ENCODE measurements at regions of chr2 and their contacts with region 1.

Region 1: DNA sequence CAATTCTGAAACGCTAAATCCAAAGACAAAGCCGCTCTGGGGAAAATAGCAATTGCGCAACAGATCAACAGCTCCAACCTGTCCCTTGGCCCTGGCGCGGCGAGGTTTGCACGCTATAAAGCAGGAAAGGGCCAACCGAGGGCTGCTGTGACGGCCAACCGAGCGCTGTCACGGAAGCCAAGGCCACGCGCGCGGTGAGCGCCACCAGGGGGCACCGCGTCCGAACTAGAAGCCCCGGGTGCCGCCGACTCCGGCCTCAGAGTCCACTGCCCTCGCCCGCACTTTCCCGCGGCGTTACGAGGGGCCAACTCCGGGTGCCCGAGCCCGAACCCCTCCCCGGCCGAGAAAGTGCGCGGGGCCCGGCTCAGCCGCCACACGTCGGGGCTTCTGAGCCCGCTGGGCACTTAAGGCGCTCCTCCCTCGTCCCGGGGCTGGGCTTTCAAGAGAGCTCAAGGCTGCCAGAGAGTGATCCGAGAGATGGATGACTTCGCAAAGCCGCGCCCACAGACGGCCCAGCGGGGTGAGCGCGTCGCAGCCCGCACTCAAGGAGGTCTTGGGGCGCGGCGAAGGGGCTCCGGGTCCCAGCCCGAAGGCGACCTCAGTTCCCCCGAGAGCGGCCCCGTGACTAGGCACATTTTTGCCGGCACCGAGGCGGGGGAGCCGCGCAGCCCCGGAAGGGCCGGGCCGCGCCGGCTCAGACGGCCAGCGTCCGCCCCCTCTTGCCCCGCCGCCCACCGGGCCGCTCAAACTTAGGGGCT is 897 bp downstream of the NFE2L2 start:
- DNase-seq: peak; percentile 83 to 98 (median 93)
- ATAC-seq: peak; percentile 65 to 74 (median 66)
- H3K4me3 ChIP-seq: peak overlapping the region; percentile 84 to 91
- H3K4me3 Mint-ChIP-seq: peak overlapping the region; percentile 96 to 97 (median 96)
- H3K27ac ChIP-seq: peak overlapping the region; percentile 98
- H3K27ac Mint-ChIP-seq: peak overlapping the region; percentile 98 to 99
- H3K4me1 ChIP-seq: peaks cover 30 to 33% of the 10 kb centered on the region in 2 experiments
- H3K4me1 Mint-ChIP-seq: peaks cover 53 to 58% (median 56%) of the 10 kb centered on the region in 3 donors
- H3K27me3 ChIP-seq: no peaks in the 10 kb centered on the region
- H3K27me3 Mint-ChIP-seq: no peaks in the 10 kb centered on the region

Region 2: GRCh38 chr2:177212106-177212890 is 51.3 kb before region 1 on chr2 and contains the start of gene HNRNPA3:
- CTCF ChIA-PET with region 1: interaction called, 3 to 9 read pairs
- POLR2A ChIA-PET with region 1: interaction called in 1 of 2 experiments, 66 read pairs
- DNase-seq: peak; percentile 98 to 100 (median 100)
- ATAC-seq: peak; percentile 84 to 91 (median 87)
- H3K4me3 ChIP-seq: peak within 1 kb of the TSS; percentile 86 to 94
- H3K4me3 Mint-ChIP-seq: peak within 1 kb of the TSS; percentile 90 to 92 (median 92)
- H3K27ac ChIP-seq: peak within 1 kb of the TSS; percentile 100
- H3K27ac Mint-ChIP-seq: peak within 1 kb of the TSS; percentile 99
- H3K4me1 ChIP-seq: peaks cover 23 to 34% of the 10 kb centered on the region in 2 experiments
- H3K4me1 Mint-ChIP-seq: peaks cover 51 to 57% (median 54%) of the 10 kb centered on the region in 3 donors
- H3K27me3 ChIP-seq: no peaks in the 10 kb centered on the region
- H3K27me3 Mint-ChIP-seq: no peaks in the 10 kb centered on the region
- total RNA-seq, gene HNRNPA3: 134 to 220 (median 151) TPM

Region 3: DNA sequence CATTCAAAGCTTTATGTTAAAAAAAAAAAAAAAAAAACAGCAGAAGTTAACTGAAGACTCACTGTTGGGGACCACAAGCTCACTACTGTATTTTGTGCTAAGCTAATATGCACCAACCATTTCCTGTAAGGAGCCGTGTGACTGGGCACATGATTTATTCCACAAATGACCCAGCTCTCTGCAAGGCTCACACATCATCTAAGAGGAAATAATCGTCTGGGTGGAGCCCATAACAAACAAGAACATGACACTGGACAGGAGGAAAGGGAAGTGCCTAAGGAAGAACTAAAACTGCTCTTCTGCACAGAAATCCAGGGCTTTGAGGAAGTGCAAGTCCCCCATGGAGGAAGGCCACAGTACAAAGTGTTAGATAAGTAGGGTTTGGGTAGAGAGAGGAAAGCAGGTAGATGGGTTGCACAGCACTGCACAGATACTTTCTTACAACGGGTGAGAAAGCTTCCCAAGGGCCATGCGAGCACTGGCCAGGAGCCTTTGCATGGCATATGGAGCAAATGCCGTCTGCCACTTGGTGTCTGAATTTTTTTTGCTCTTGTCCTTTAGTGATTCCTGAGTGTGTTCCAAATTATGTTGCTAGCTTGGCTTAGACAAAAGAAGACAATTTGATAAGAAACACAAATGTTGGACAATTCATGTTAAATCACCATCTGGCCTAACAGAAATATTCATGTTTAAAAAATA is 23.5 kb before region 1 on chr2:
- CTCF ChIA-PET with region 1: interaction called, 4 to 38 read pairs
- POLR2A ChIA-PET with region 1: interaction called, 10 to 51 read pairs
- DNase-seq: peak in 21 of 35 experiments; percentile 8 to 66 (median 22)
- ATAC-seq: peak; percentile 63 to 79 (median 75)
- H3K4me3 ChIP-seq: no peak overlapping the region
- H3K4me3 Mint-ChIP-seq: peak overlapping the region; percentile 43 to 60 (median 49)
- H3K27ac ChIP-seq: peak overlapping the region; percentile 72
- H3K27ac Mint-ChIP-seq: peak overlapping the region; percentile 85 to 88
- H3K4me1 ChIP-seq: peaks cover 40 to 42% of the 10 kb centered on the region in 2 experiments
- H3K4me1 Mint-ChIP-seq: peaks cover 84 to 94% (median 86%) of the 10 kb centered on the region in 3 donors
- H3K27me3 ChIP-seq: no peaks in the 10 kb centered on the region
- H3K27me3 Mint-ChIP-seq: no peaks in the 10 kb centered on the region

Region 4: DNA sequence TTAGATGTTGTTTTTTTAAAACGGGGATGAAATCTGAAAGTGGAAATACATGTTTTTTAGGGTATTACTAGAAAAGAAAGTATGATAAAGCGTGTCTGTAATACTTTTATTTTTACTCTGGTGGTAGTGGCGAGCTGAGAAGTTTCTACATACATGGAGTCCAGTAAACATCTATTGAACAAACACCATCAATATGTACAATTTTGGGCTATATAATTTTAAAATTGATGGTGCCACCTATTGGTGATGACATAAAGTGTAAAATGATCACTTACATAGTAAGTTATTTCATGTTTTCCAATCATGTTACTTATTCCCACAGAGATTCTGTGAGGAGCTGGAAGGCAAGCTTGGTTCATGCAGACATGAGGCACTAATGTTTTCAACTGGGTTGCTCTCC is 32.4 kb after region 1 on chr2:
- CTCF ChIA-PET with region 1: interaction called, 10 to 35 read pairs
- POLR2A ChIA-PET with region 1: interaction called, 3 to 10 read pairs
- DNase-seq: peak in 1 of 35 experiments; percentile 64
- ATAC-seq: peak; percentile 50 to 59 (median 58)
- H3K4me3 ChIP-seq: no peak overlapping the region
- H3K4me3 Mint-ChIP-seq: no peak overlapping the region
- H3K27ac ChIP-seq: no peak overlapping the region
- H3K27ac Mint-ChIP-seq: no peak overlapping the region
- H3K4me1 ChIP-seq: peaks cover 0 to 6% of the 10 kb centered on the region in 2 experiments
- H3K4me1 Mint-ChIP-seq: peaks cover 13 to 18% (median 15%) of the 10 kb centered on the region in 3 donors
- H3K27me3 ChIP-seq: no peaks in the 10 kb centered on the region
- H3K27me3 Mint-ChIP-seq: no peaks in the 10 kb centered on the region

Region 5: GRCh38 chr2:177392373-177393202 is 129.0 kb after region 1 on chr2 and contains the start of gene AGPS:
- CTCF ChIA-PET with region 1: interaction called, 3 to 11 read pairs
- POLR2A ChIA-PET with region 1: interaction called in 1 of 2 experiments, 9 read pairs
- DNase-seq: peak; percentile 45 to 82 (median 65)
- ATAC-seq: peak; percentile 93 to 97 (median 94)
- H3K4me3 ChIP-seq: peak within 1 kb of the TSS; percentile 59 to 94
- H3K4me3 Mint-ChIP-seq: peak within 1 kb of the TSS; percentile 84 to 94 (median 91)
- H3K27ac ChIP-seq: peak within 1 kb of the TSS; percentile 40
- H3K27ac Mint-ChIP-seq: peak within 1 kb of the TSS; percentile 56 to 87
- H3K4me1 ChIP-seq: peaks cover 15 to 18% of the 10 kb centered on the region in 2 experiments
- H3K4me1 Mint-ChIP-seq: peaks cover 52 to 68% (median 64%) of the 10 kb centered on the region in 3 donors
- H3K27me3 ChIP-seq: no peaks in the 10 kb centered on the region
- H3K27me3 Mint-ChIP-seq: no peaks in the 10 kb centered on the region
- total RNA-seq, gene AGPS: 26.1 to 32.3 (median 29.6) TPM

Region 6: GRCh38 chr2:177516824-177517544 is 253.4 kb after region 1 on chr2:
- CTCF ChIA-PET with region 1: no interaction called
- POLR2A ChIA-PET with region 1: no interaction called
- DNase-seq: no peak
- ATAC-seq: no peak
- H3K4me3 ChIP-seq: no peak overlapping the region
- H3K4me3 Mint-ChIP-seq: no peak overlapping the region
- H3K27ac ChIP-seq: no peak overlapping the region
- H3K27ac Mint-ChIP-seq: no peak overlapping the region
- H3K4me1 ChIP-seq: no peaks in the 10 kb centered on the region
- H3K4me1 Mint-ChIP-seq: no peaks in the 10 kb centered on the region
- H3K27me3 ChIP-seq: no peaks in the 10 kb centered on the region
- H3K27me3 Mint-ChIP-seq: no peaks in the 10 kb centered on the region